Caco-2 (cell line): ENCODE measurements at regions of chr20 and their contacts with region 1.

Region 1: GRCh38 chr20:48463403-48464319 is 364.1 kb downstream of the PREX1 start:
- DNase-seq: no peak
- H3K4me3 ChIP-seq: no peak overlapping the region
- H3K4me3 Mint-ChIP-seq: no peak overlapping the region
- H3K27ac Mint-ChIP-seq: no peak overlapping the region
- H3K4me1 ChIP-seq: peaks cover 7% of the 10 kb centered on the region
- H3K4me1 Mint-ChIP-seq: peaks cover 7% of the 10 kb centered on the region
- H3K27me3 ChIP-seq: no peaks in the 10 kb centered on the region
- H3K27me3 Mint-ChIP-seq: peaks cover 5% of the 10 kb centered on the region
- CTCF ChIP-seq: no peak

Region 2: GRCh38 chr20:48545015-48545718 is 81.5 kb after region 1 on chr20:
- CTCF ChIA-PET with region 1: no interaction called
- POLR2A ChIA-PET with region 1: no interaction called
- intact Hi-C with region 1: no loop called
- DNase-seq: no peak
- H3K4me3 ChIP-seq: no peak overlapping the region
- H3K4me3 Mint-ChIP-seq: no peak overlapping the region
- H3K27ac Mint-ChIP-seq: no peak overlapping the region
- H3K4me1 ChIP-seq: peaks cover 30% of the 10 kb centered on the region
- H3K4me1 Mint-ChIP-seq: peaks cover 22% of the 10 kb centered on the region
- H3K27me3 ChIP-seq: no peaks in the 10 kb centered on the region
- H3K27me3 Mint-ChIP-seq: no peaks in the 10 kb centered on the region
- CTCF ChIP-seq: no peak

Region 3: DNA sequence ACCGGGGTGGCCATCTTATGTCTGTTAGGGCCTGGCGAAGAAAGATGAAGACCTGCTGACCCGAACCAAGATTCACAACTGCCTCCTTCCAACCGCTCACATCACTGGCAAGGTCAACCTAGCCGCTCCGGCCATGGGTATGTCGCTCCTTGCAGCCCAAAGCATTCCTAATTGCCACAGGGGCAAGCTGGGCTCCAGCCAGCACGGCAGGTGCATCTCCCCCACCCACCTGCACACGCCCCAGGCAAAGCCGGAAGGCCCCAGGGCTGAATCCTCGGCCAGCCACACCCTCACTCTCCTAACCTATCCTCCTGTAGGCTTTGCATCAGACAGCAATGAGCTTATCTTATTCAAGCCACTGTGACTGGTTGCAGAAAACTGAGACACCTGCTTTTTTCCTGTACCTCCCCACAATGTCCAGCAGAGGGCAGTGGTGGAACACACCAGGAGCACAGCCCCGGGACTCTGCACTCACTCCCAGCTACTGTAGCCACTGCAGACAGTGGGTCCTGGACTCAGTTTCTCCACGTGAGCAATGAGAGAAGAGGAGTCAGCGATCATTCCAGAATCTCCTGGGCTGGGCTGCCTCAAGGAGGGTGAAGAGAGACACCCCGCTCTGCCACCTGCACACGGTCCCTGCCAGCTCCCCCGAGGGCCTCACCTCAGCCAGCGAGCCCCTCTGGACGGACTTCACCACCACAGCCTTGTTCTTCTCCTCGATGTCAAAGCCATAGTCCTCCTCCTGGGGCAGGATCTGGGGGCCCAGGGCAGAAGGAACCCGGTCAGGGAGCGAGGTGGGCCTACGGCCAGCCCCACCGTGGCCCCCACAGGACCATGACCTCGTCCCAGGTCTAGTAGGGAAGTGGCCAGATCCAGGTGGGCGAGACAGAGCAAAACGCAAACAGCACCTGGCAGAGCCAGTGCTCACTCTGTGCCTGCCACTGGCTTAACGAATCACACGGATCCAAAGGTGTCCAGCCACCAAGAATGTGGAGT is 194.1 kb after region 1 on chr20:
- CTCF ChIA-PET with region 1: no interaction called
- POLR2A ChIA-PET with region 1: no interaction called
- intact Hi-C with region 1: no loop called
- DNase-seq: peak; percentile 85 to 89
- H3K4me3 ChIP-seq: no peak overlapping the region
- H3K4me3 Mint-ChIP-seq: no peak overlapping the region
- H3K27ac Mint-ChIP-seq: no peak overlapping the region
- H3K4me1 ChIP-seq: no peaks in the 10 kb centered on the region
- H3K4me1 Mint-ChIP-seq: peaks cover 6% of the 10 kb centered on the region
- H3K27me3 ChIP-seq: no peaks in the 10 kb centered on the region
- H3K27me3 Mint-ChIP-seq: no peaks in the 10 kb centered on the region
- CTCF ChIP-seq: peak; percentile 99 to 100

Region 4: GRCh38 chr20:48787861-48788375 is 324.3 kb after region 1 on chr20:
- CTCF ChIA-PET with region 1: no interaction called
- POLR2A ChIA-PET with region 1: no interaction called
- intact Hi-C with region 1: loop called (anchors 5 kb)
- DNase-seq: no peak
- H3K4me3 ChIP-seq: no peak overlapping the region
- H3K4me3 Mint-ChIP-seq: no peak overlapping the region
- H3K27ac Mint-ChIP-seq: no peak overlapping the region
- H3K4me1 ChIP-seq: no peaks in the 10 kb centered on the region
- H3K4me1 Mint-ChIP-seq: no peaks in the 10 kb centered on the region
- H3K27me3 ChIP-seq: no peaks in the 10 kb centered on the region; the same call in 1 of the 2 replicates
- H3K27me3 Mint-ChIP-seq: peaks cover 23% of the 10 kb centered on the region
- CTCF ChIP-seq: no peak